CD14-positive monocyte (primary cell): ENCODE measurements at regions of chr5 and their contacts with region 1.

Region 1: DNA sequence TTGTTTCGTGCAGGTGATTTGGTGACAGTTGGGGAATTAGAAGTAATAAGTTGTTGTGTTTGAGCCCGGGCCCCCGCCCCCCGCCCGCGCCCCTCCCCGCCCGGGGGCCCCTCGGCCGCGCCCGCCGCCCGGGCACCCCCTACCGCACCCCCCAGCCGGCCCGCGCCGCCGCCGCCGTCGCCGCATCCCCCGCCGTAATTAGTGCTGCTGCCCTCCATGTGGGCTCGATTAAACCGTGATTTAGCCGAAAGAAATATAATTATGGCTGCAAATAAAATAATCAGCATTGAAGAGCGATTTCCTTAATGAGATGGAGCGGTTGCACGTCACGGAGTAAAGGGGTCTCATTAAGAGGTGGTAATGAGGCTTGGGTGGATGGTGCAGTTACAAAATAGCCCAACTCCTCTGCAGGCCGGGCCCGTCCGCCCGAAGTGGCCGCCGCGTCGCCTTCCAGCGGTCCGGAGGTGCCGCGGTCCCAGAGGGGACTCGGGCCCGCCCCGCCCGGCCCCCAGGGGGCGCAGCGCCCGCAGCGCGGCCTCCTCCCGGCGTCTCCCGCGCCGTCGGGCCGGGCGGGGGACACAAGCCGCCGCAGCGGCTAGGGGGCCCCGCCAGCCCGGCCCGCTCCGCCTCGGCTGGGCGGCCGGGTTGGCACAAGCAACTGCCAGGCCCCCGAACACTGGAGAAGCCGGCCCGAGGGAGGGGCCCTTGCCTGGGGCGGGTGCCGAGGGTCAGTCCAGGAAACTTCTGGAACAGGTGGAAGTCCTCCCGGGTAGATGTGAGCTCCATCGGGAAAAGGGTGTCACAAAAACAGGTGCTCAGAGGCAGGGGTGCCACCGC is 6.9 kb upstream of the OTP start:
- DNase-seq: peak in 2 of 3 donors; percentile 28 to 56
- H3K4me3 ChIP-seq: peak overlapping the region in 1 of 3 experiments; percentile 70
- H3K4me3 Mint-ChIP-seq: peak overlapping the region; percentile 58 to 99
- H3K27ac ChIP-seq: no peak overlapping the region
- H3K27ac Mint-ChIP-seq: no peak overlapping the region
- H3K4me1 ChIP-seq: peaks cover 19 to 29% of the 10 kb centered on the region in 2 donors
- H3K4me1 Mint-ChIP-seq: peaks cover 35% of the 10 kb centered on the region
- H3K27me3 ChIP-seq: peaks cover 92 to 97% of the 10 kb centered on the region in 2 donors
- H3K27me3 Mint-ChIP-seq: peaks cover 88 to 99% (median 91%) of the 10 kb centered on the region in 3 donors
- CTCF ChIP-seq: peak; percentile 65

Region 2: DNA sequence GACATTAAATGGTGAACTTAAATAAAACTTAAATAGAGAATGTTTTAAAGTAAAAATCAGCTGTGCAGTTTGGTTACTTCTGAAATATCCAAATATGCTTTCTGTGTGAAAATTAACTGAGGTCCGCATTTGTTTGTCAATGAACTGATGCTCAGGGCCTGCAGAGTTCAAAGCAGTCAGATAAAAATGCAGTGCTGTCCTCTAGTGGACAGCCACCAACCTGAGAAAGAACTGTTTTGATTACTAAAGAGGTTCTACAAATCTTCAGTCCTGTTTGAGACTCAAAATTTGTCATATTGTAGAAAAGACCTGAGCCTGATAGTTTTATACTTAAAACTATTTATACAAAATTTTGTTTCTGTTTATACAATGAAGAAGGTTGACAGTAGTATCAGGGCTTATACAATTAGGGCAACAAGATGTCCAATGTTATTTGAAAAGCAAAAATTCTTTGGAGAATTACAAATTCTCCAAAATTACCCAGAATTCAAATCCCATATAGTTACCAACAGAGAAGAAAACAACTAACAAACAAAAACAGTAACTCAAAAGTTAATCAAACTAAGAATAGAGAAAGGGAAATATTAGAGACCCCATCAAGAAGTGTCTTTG is 363.1 kb after region 1 on chr5:
- intact Hi-C with region 1: loop called in 1 of 2 experiments (anchors 10 kb)
- DNase-seq: peak in 2 of 3 donors; percentile 6 to 14
- H3K4me3 ChIP-seq: no peak overlapping the region
- H3K4me3 Mint-ChIP-seq: no peak overlapping the region
- H3K27ac ChIP-seq: no peak overlapping the region
- H3K27ac Mint-ChIP-seq: no peak overlapping the region
- H3K4me1 ChIP-seq: peaks cover 8 to 9% of the 10 kb centered on the region in 2 donors
- H3K4me1 Mint-ChIP-seq: peaks cover 11% of the 10 kb centered on the region
- H3K27me3 ChIP-seq: no peaks in the 10 kb centered on the region
- H3K27me3 Mint-ChIP-seq: no peaks in the 10 kb centered on the region
- CTCF ChIP-seq: peak; percentile 70